ENCODE measurements at regions of chr22 and their contacts with region 1.

Region 1: DNA sequence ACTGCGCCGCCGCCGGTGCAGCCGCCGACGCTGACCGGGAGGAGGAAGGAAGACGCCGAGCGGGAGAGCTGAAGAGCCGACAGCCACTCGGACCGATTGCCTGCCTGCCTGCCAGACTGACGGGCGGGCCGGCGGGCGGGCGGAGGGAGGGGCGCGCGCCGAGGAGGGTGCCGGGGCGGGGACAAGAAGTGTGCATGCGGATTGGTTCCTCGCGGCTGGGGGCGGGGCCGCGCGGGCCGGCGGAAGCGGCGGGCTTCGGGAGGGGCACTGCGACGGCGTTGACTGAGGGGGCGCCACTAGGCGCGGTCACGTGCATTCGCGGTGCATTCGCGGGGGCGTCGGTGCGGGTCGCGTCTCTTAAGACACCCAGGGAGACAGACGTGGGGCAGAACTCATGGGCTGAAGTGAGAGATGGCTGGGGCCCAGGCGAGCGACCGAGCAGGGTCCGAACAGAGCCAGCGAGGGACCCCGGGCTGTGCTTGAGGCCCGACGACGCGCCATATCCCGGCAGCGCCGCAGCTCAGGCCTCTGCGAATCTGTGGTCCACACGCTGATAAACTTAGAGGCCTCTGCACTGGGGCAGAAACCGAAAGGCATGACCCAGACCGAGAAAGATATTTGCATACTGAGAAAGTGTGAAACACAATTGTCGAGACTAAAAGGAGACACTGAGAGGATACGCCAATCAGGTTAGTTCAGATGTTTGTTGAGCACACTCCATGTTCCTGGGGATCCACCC is at the start of gene MAPK1:
- DNase-seq: peak; percentile 98
- total RNA-seq, gene MAPK1: 124 TPM

Region 2: GRCh38 chr22:21735200-21736076 is 132.3 kb before region 1 on chr22 and contains the start of gene YPEL1:
- intact Hi-C with region 1: loop called (anchors 5 kb)
- DNase-seq: peak; percentile 98
- total RNA-seq, gene YPEL1: 9.6 TPM

Region 3: GRCh38 chr22:21778705-21779363 is 88.9 kb before region 1 on chr22:
- intact Hi-C with region 1: loop called (anchors 5 kb)
- DNase-seq: no peak

Region 4: GRCh38 chr22:21796867-21797266 is 70.8 kb before region 1 on chr22:
- intact Hi-C with region 1: loop called (anchors 5 kb)
- DNase-seq: no peak